H1 (cell line): ENCODE measurements at regions of chr1 and their contacts with region 1.

Region 1: GRCh38 chr1:17696417-17697301 is 58.5 kb upstream of the ACTL8 start:
- DNase-seq: peak; percentile 17 to 59
- H3K4me3 ChIP-seq: no peak overlapping the region
- H3K27ac ChIP-seq: no peak overlapping the region
- H3K4me1 ChIP-seq: peaks cover 0 to 8% (median under 1%) of the 10 kb centered on the region in 4 experiments; a peak in 4 of 7 replicates
- H3K27me3 ChIP-seq: no peaks in the 10 kb centered on the region; a peak in 1 of 7 replicates
- CTCF ChIP-seq: peak; percentile 40 to 64 (median 55)
- EP300 ChIP-seq: no peak
- POLR2A ChIP-seq: no peak
- RAD21 ChIP-seq: peak; percentile 36 to 57

Region 2: DNA sequence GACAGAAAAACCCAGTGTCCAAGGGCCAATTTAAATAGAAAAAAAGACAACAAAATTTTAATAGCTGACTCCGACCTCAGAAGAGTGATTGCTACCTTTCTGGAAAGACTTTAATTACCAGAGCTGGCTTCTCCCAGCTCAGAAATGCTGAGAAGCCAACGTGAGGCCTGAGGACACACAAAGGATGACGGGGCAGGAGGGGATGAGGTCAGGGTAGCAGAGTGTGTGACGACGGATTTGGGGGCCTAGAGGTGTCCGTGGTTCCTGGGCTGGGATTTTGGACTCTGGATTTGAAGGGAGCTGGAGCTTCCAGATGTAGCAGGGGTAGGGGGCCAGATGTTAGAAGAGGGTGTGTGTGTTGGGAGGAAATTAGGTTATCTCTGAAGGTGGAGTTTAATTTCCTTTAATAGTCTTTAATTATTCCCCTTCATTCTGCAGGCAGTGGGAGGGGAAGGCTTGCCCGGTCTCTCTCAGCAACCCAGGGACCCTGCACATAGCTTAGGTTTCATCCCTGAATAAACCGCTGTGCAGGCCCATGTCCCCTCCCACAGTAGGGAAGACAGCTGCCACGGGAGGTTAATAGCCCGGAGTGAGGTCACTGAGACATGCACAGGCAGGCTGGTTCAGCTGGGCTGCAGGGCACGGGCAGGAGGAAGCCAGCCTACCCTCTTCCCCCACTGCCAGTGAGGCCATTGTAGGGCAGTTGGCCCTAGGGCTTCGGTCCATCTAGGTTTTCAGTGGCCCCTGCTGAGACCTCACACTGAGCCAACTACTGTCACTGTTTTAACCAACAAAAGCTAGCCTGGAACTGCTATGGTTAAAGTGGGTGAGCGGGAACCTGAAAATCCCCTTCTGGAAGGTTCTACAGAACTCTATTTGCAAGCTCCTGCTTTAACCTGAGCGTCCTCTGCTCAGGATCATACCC is 451.6 kb before region 1 on chr1:
- CTCF ChIA-PET with region 1: no interaction called
- POLR2A ChIA-PET with region 1: no interaction called
- DNase-seq: no peak
- H3K4me3 ChIP-seq: no peak overlapping the region
- H3K27ac ChIP-seq: no peak overlapping the region
- H3K4me1 ChIP-seq: peaks cover 0 to 12% (median 3%) of the 10 kb centered on the region in 4 experiments; a peak in 4 of 7 replicates
- H3K27me3 ChIP-seq: no peaks in the 10 kb centered on the region
- CTCF ChIP-seq: no peak
- EP300 ChIP-seq: no peak
- POLR2A ChIP-seq: no peak
- RAD21 ChIP-seq: no peak

Region 3: GRCh38 chr1:17653728-17654351 is 42.8 kb before region 1 on chr1:
- CTCF ChIA-PET with region 1: interaction called, 127 read pairs
- POLR2A ChIA-PET with region 1: no interaction called
- DNase-seq: peak in 1 of 2 experiments; percentile 77
- H3K4me3 ChIP-seq: no peak overlapping the region
- H3K27ac ChIP-seq: no peak overlapping the region
- H3K4me1 ChIP-seq: no peaks in the 10 kb centered on the region
- H3K27me3 ChIP-seq: no peaks in the 10 kb centered on the region
- CTCF ChIP-seq: peak in 2 of 3 experiments; percentile 75 to 87; a peak in 3 of 4 replicates
- EP300 ChIP-seq: no peak
- POLR2A ChIP-seq: no peak
- RAD21 ChIP-seq: peak; percentile 69 to 80

Region 4: GRCh38 chr1:17671741-17672140 is 24.9 kb before region 1 on chr1:
- CTCF ChIA-PET with region 1: interaction called, 27 read pairs
- POLR2A ChIA-PET with region 1: interaction called, 3 read pairs
- DNase-seq: peak in 1 of 2 experiments; percentile 61
- H3K4me3 ChIP-seq: no peak overlapping the region
- H3K27ac ChIP-seq: no peak overlapping the region
- H3K4me1 ChIP-seq: peaks cover 0 to 15% (median 7%) of the 10 kb centered on the region in 4 experiments; a peak in 5 of 7 replicates
- H3K27me3 ChIP-seq: no peaks in the 10 kb centered on the region
- CTCF ChIP-seq: peak in 2 of 3 experiments; percentile 9 to 30; a peak in 1 of 4 replicates
- EP300 ChIP-seq: no peak
- POLR2A ChIP-seq: no peak
- RAD21 ChIP-seq: no peak

Region 5: DNA sequence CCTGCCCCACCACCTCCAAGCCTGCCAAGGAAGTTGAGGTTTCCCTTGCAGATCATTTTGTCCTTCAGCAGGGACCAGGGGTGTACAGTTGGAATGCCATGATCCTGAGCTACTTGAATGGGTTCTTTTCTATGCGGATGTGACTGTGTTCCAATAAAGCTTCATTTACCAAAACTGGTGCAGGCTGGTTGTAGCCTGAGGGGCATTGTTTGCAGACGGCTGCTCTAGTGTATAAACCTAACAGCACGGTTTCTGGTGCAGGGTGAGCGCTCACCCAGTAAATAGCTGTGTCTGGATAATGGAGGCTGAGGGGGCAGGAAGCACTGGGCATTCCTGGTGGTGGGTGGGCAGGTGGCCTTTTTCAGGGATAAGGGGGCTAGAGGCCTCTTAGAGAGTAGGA is 14.3 kb before region 1 on chr1:
- CTCF ChIA-PET with region 1: interaction called, 52 read pairs
- POLR2A ChIA-PET with region 1: interaction called, 3 read pairs
- DNase-seq: no peak
- H3K4me3 ChIP-seq: no peak overlapping the region
- H3K27ac ChIP-seq: no peak overlapping the region
- H3K4me1 ChIP-seq: peaks cover 0 to 8% (median 5%) of the 10 kb centered on the region in 4 experiments; a peak in 5 of 7 replicates
- H3K27me3 ChIP-seq: no peaks in the 10 kb centered on the region
- CTCF ChIP-seq: no peak
- EP300 ChIP-seq: no peak
- POLR2A ChIP-seq: no peak
- RAD21 ChIP-seq: no peak

Region 6: GRCh38 chr1:17711941-17712340 is 15.3 kb after region 1 on chr1:
- CTCF ChIA-PET with region 1: interaction called, 16 read pairs
- POLR2A ChIA-PET with region 1: no interaction called
- DNase-seq: no peak
- H3K4me3 ChIP-seq: no peak overlapping the region
- H3K27ac ChIP-seq: no peak overlapping the region
- H3K4me1 ChIP-seq: no peaks in the 10 kb centered on the region
- H3K27me3 ChIP-seq: peaks cover 0 to 2% (median 0%) of the 10 kb centered on the region in 4 experiments; a peak in 1 of 7 replicates
- CTCF ChIP-seq: no peak
- EP300 ChIP-seq: no peak
- POLR2A ChIP-seq: no peak
- RAD21 ChIP-seq: no peak